B cell (primary cell): ENCODE measurements at regions of chr21 and their contacts with region 1.

Region 1: GRCh38 chr21:15064576-15065391 is at the start of gene NRIP1:
- DNase-seq: peak; percentile 93
- ATAC-seq: peak; percentile 80
- H3K4me3 ChIP-seq: peak within 1 kb of the TSS; percentile 72 to 95 (median 89)
- H3K4me3 Mint-ChIP-seq: peak within 1 kb of the TSS; percentile 96
- H3K27ac ChIP-seq: peak within 1 kb of the TSS; percentile 93 to 94
- H3K27ac Mint-ChIP-seq: peak within 1 kb of the TSS; percentile 96
- H3K4me1 ChIP-seq: peaks cover 32 to 43% of the 10 kb centered on the region in 2 donors
- H3K4me1 Mint-ChIP-seq: peaks cover 51% of the 10 kb centered on the region
- H3K27me3 ChIP-seq: peaks cover 0 to 4% (median 0%) of the 10 kb centered on the region in 4 experiments
- H3K27me3 Mint-ChIP-seq: peaks cover 5% of the 10 kb centered on the region
- CTCF ChIP-seq: no peak
- total RNA-seq, gene NRIP1: 32.1 and 35.9 TPM in 2 replicates

Region 2: GRCh38 chr21:14215971-14216641 is 848.7 kb before region 1 on chr21 and contains the start of gene RBM11:
- CTCF ChIA-PET with region 1: no interaction called
- POLR2A ChIA-PET with region 1: no interaction called
- intact Hi-C with region 1: loop called (anchors 5 kb)
- DNase-seq: peak; percentile 87
- ATAC-seq: peak; percentile 98
- H3K4me3 ChIP-seq: peak within 1 kb of the TSS; percentile 44 to 82 (median 72)
- H3K4me3 Mint-ChIP-seq: peak within 1 kb of the TSS; percentile 89
- H3K27ac ChIP-seq: peak within 1 kb of the TSS in 1 of 2 donors; percentile 20
- H3K27ac Mint-ChIP-seq: peak within 1 kb of the TSS; percentile 67
- H3K4me1 ChIP-seq: peaks cover 8 to 12% of the 10 kb centered on the region in 2 donors
- H3K4me1 Mint-ChIP-seq: peaks cover 7% of the 10 kb centered on the region
- H3K27me3 ChIP-seq: peaks cover 0 to 7% (median 3%) of the 10 kb centered on the region in 4 experiments
- H3K27me3 Mint-ChIP-seq: peaks cover 11% of the 10 kb centered on the region
- CTCF ChIP-seq: no peak
- total RNA-seq, gene RBM11: 3.0 and 3.4 TPM in 2 replicates

Region 3: DNA sequence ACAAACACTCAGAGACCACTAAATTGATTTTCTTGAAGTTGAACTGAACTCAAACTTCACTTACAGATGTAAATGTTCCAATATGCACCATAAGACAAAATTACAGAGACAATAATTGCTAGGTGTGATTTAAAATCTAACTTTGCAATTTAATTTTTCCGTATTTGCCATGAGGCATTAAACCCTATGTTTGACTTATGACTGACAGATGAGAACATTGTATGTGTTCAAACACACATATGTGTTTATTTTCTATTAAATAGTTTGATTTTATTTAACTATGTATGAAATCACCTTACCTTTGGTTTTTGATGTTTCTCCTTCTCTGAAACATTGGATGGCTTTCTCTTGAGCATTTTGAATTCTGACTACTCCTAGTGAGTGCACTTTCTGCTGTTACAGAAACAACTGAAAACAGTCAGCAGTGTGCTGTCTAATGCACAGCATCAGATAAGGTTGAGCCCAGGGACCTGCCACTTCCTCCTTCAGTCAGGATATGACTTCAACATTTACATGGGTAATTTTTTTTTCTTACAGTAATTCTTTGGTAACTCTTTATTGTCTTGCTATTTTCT is 518.8 kb before region 1 on chr21 and contains the start of gene SAMSN1:
- CTCF ChIA-PET with region 1: no interaction called
- POLR2A ChIA-PET with region 1: no interaction called
- intact Hi-C with region 1: loop called (anchors 10 kb)
- DNase-seq: peak; percentile 78
- ATAC-seq: peak; percentile 94
- H3K4me3 ChIP-seq: peak within 1 kb of the TSS; percentile 35 to 91 (median 57)
- H3K4me3 Mint-ChIP-seq: peak within 1 kb of the TSS; percentile 96
- H3K27ac ChIP-seq: peak within 1 kb of the TSS; percentile 37 to 59
- H3K27ac Mint-ChIP-seq: peak within 1 kb of the TSS; percentile 94
- H3K4me1 ChIP-seq: peaks cover 27 to 29% of the 10 kb centered on the region in 2 donors
- H3K4me1 Mint-ChIP-seq: peaks cover 45% of the 10 kb centered on the region
- H3K27me3 ChIP-seq: no peaks in the 10 kb centered on the region
- H3K27me3 Mint-ChIP-seq: no peaks in the 10 kb centered on the region
- CTCF ChIP-seq: no peak
- total RNA-seq, gene SAMSN1: 53.1 and 57.6 TPM in 2 replicates

Region 4: GRCh38 chr21:14762734-14763694 is 301.8 kb before region 1 on chr21:
- CTCF ChIA-PET with region 1: no interaction called
- POLR2A ChIA-PET with region 1: no interaction called
- intact Hi-C with region 1: loop called (anchors 5 kb)
- DNase-seq: peak; percentile 83
- ATAC-seq: peak; percentile 93
- H3K4me3 ChIP-seq: peak overlapping the region; percentile 24 to 72 (median 48)
- H3K4me3 Mint-ChIP-seq: no peak overlapping the region
- H3K27ac ChIP-seq: peak overlapping the region; percentile 69 to 87
- H3K27ac Mint-ChIP-seq: no peak overlapping the region
- H3K4me1 ChIP-seq: peaks cover 27 to 36% of the 10 kb centered on the region in 2 donors
- H3K4me1 Mint-ChIP-seq: peaks cover 36% of the 10 kb centered on the region
- H3K27me3 ChIP-seq: no peaks in the 10 kb centered on the region
- H3K27me3 Mint-ChIP-seq: no peaks in the 10 kb centered on the region
- CTCF ChIP-seq: no peak

Region 5: GRCh38 chr21:14877570-14878228 is 187.1 kb before region 1 on chr21:
- CTCF ChIA-PET with region 1: no interaction called
- POLR2A ChIA-PET with region 1: no interaction called
- intact Hi-C with region 1: loop called (anchors 5 kb)
- DNase-seq: no peak
- ATAC-seq: peak; percentile 68
- H3K4me3 ChIP-seq: no peak overlapping the region
- H3K4me3 Mint-ChIP-seq: peak overlapping the region; percentile 12
- H3K27ac ChIP-seq: no peak overlapping the region
- H3K27ac Mint-ChIP-seq: no peak overlapping the region
- H3K4me1 ChIP-seq: peaks cover 48 to 57% of the 10 kb centered on the region in 2 donors
- H3K4me1 Mint-ChIP-seq: peaks cover 74% of the 10 kb centered on the region
- H3K27me3 ChIP-seq: no peaks in the 10 kb centered on the region
- H3K27me3 Mint-ChIP-seq: no peaks in the 10 kb centered on the region
- CTCF ChIP-seq: no peak

Region 6: GRCh38 chr21:15483138-15483780 is 418.5 kb after region 1 on chr21:
- CTCF ChIA-PET with region 1: interaction called, 9 read pairs
- POLR2A ChIA-PET with region 1: no interaction called
- intact Hi-C with region 1: loop called (anchors 1 kb)
- DNase-seq: peak; percentile 83
- ATAC-seq: peak; percentile 99
- H3K4me3 ChIP-seq: no peak overlapping the region
- H3K4me3 Mint-ChIP-seq: no peak overlapping the region
- H3K27ac ChIP-seq: no peak overlapping the region
- H3K27ac Mint-ChIP-seq: no peak overlapping the region
- H3K4me1 ChIP-seq: peaks cover 0 to 3% of the 10 kb centered on the region in 2 donors
- H3K4me1 Mint-ChIP-seq: peaks cover 2% of the 10 kb centered on the region
- H3K27me3 ChIP-seq: no peaks in the 10 kb centered on the region
- H3K27me3 Mint-ChIP-seq: peaks cover 4% of the 10 kb centered on the region
- CTCF ChIP-seq: peak; percentile 93

Region 7: GRCh38 chr21:15729674-15730483 is 665.1 kb after region 1 on chr21 and contains the start of gene USP25:
- CTCF ChIA-PET with region 1: interaction called, 3 read pairs
- POLR2A ChIA-PET with region 1: no interaction called
- intact Hi-C with region 1: loop called (anchors 2 kb)
- DNase-seq: peak; percentile 92
- ATAC-seq: peak; percentile 87
- H3K4me3 ChIP-seq: peak within 1 kb of the TSS; percentile 56 to 96 (median 73)
- H3K4me3 Mint-ChIP-seq: peak within 1 kb of the TSS; percentile 95
- H3K27ac ChIP-seq: peak within 1 kb of the TSS; percentile 53 to 82
- H3K27ac Mint-ChIP-seq: peak within 1 kb of the TSS; percentile 93
- H3K4me1 ChIP-seq: peaks cover 18 to 31% of the 10 kb centered on the region in 2 donors
- H3K4me1 Mint-ChIP-seq: peaks cover 36% of the 10 kb centered on the region
- H3K27me3 ChIP-seq: no peaks in the 10 kb centered on the region
- H3K27me3 Mint-ChIP-seq: peaks cover 6% of the 10 kb centered on the region
- CTCF ChIP-seq: no peak
- total RNA-seq, gene USP25: 53.2 and 55.5 TPM in 2 replicates